Right lobe of liver (tissue), 6 donors: ENCODE measurements at regions of chr20 and their contacts with region 1.

Region 1: GRCh38 chr20:56257604-56258003 is 9.1 kb downstream of the MC3R start:
- DNase-seq: no peak
- ATAC-seq: no peak
- H3K4me3 ChIP-seq: no peak overlapping the region
- H3K27ac ChIP-seq: no peak overlapping the region
- H3K4me1 ChIP-seq: no peaks in the 10 kb centered on the region
- H3K27me3 ChIP-seq: no peaks in the 10 kb centered on the region
- CTCF ChIP-seq: no peak
- POLR2A ChIP-seq: no peak

Region 2: DNA sequence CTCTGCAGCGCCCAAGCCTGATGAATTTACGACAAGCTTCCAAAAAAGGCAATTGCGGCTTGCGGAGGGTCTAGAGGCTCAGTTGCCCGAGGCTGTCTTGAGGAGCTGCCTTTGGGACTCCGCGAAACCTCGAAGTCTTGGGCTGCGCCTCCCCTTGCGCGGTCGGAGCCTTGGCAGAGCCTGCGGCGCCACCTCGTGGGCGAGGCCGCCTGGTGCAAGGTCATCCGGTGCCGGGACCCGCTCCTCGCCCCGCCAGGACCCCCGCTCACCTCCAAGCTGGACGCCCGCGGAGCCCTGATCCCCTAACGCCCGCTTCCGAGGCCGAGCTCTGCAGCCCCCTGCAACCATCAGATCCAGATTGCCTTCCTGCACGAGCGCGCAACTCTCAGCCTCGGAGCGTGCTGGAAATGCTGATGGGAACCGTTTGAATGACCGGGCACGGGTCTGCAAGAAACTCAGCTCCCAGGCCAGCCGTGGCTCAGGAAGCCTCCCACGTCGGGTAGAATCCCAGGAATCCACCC is 86.3 kb after region 1 on chr20:
- intact Hi-C with region 1: loop called in 1 of 2 experiments (anchors 10 kb)
- DNase-seq: peak; percentile 52 to 56 (median 54)
- ATAC-seq: peak; percentile 64 to 77 (median 72)
- H3K4me3 ChIP-seq: no peak overlapping the region
- H3K27ac ChIP-seq: no peak overlapping the region
- H3K4me1 ChIP-seq: peaks cover 0 to 17% (median 0%) of the 10 kb centered on the region in 4 donors
- H3K27me3 ChIP-seq: peaks cover 0 to 8% of the 10 kb centered on the region in 2 donors
- CTCF ChIP-seq: peak; percentile 68 to 77 (median 73)
- POLR2A ChIP-seq: no peak